Transverse colon (tissue), 4 donors: ENCODE measurements at regions of chr5 and their contacts with region 1.

Region 1: DNA sequence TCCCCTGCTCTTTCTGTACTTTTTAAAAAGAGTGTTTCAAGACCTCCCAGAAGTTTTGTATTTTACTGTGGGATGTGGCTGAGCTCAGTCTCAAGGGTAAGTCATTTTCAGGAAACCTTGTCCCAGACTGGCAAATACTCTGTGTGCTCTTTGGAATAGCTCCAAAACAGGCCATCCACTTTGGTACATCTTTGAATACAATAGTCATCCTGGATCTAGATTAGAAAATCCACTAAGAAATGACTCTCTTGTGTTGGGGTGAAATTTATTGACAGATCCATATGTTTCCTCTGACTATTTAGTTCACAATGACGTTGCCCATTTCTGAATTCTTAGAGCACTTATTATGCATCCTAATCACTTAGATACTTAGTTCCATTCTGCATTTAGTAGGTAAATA is 95.2 kb downstream of the PLCXD3 start:
- DNase-seq: no peak
- H3K4me3 ChIP-seq: no peak overlapping the region
- H3K27ac ChIP-seq: no peak overlapping the region
- H3K4me1 ChIP-seq: no peaks in the 10 kb centered on the region
- H3K27me3 ChIP-seq: no peaks in the 10 kb centered on the region
- CTCF ChIP-seq: no peak
- EP300 ChIP-seq: no peak
- POLR2A ChIP-seq: no peak

Region 2: GRCh38 chr5:41392016-41392415 is 23.2 kb before region 1 on chr5:
- in situ Hi-C with region 1: no loop called
- intact Hi-C with region 1: loop called (anchors 1 kb)
- DNase-seq: no peak
- H3K4me3 ChIP-seq: no peak overlapping the region
- H3K27ac ChIP-seq: no peak overlapping the region
- H3K4me1 ChIP-seq: no peaks in the 10 kb centered on the region
- H3K27me3 ChIP-seq: no peaks in the 10 kb centered on the region
- CTCF ChIP-seq: no peak
- EP300 ChIP-seq: no peak
- POLR2A ChIP-seq: no peak

Region 3: GRCh38 chr5:41903892-41904799 is 488.9 kb after region 1 on chr5 and contains the start of gene RIMOC1:
- in situ Hi-C with region 1: no loop called
- intact Hi-C with region 1: no loop called
- DNase-seq: peak; percentile 99
- H3K4me3 ChIP-seq: peak within 1 kb of the TSS; percentile 32 to 87 (median 68)
- H3K27ac ChIP-seq: peak within 1 kb of the TSS; percentile 89 to 92 (median 90)
- H3K4me1 ChIP-seq: peaks cover 9 to 38% (median 13%) of the 10 kb centered on the region in 4 donors
- H3K27me3 ChIP-seq: peaks cover 23% of the 10 kb centered on the region
- CTCF ChIP-seq: no peak
- EP300 ChIP-seq: peak; percentile 3
- POLR2A ChIP-seq: peak; percentile 96
- total RNA-seq, gene RIMOC1: 10.9 to 19.8 (median 15.6) TPM